ENCODE measurements at regions of chr5 and their contacts with region 1.

Region 1: GRCh38 chr5:171907725-171908343 is 98.6 kb downstream of the FBXW11 start:
- DNase-seq: peak; percentile 43
- H3K4me3 ChIP-seq: no peak overlapping the region
- H3K27ac ChIP-seq: no peak overlapping the region
- H3K27me3 ChIP-seq: no peaks in the 10 kb centered on the region
- CTCF ChIP-seq: peak; percentile 78

Region 2: DNA sequence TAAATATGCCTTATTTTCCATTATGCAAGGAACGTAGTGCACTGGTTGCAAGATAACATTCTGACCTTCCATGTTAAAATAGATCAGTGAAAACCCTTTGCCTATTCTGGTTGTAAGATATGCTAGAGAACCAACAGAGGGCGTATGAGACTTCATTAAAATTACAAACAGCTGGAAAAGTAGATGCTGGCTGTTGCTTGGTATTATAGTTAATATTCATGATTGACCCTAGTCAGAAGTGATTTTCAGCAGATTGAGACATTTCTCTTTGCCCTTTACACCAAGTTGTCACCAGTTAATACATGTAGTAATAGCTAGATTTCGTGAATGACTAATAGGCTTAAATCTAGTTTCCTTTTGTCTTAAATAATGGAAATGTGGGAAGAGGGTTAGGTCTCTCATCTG is 502.2 kb before region 1 on chr5:
- CTCF ChIA-PET with region 1: interaction called, 21 read pairs
- POLR2A ChIA-PET with region 1: no interaction called
- DNase-seq: no peak
- H3K4me3 ChIP-seq: no peak overlapping the region
- H3K27ac ChIP-seq: no peak overlapping the region
- H3K27me3 ChIP-seq: no peaks in the 10 kb centered on the region
- CTCF ChIP-seq: peak; percentile 51

Region 3: DNA sequence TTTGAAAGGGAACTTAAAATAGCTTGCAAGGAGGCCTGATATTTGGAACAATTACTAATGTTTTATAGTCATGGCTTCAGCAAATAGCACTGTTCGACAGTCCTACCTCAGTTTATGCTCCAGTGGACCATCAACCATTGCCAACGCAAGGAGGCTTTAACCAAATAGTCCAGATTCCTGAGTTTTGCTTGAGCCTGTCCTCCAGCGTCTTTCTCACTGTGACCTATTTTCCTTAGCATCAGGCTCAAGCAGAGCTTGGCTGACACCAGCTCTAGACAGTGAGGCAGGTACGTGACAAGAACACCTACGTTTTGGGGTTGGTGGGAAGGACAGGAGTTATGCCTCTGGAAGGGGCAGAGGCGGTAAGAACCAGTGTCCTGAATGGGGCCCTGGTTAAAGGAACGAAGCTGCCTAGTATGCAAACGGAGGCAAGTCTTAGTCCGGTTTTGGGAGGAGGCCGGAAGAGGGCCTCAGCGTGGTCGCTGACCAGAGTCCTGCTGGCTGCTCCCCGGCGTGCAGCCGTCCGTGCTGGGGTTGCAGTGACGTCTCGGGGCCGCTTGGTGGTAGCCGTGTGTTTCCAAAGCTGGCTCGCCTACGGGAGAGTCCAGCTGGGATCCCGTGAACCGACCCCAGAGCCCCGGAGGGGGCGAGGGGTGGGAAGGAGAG is 489.4 kb before region 1 on chr5:
- CTCF ChIA-PET with region 1: interaction called, 141 read pairs
- POLR2A ChIA-PET with region 1: no interaction called
- DNase-seq: peak; percentile 72
- H3K4me3 ChIP-seq: peak overlapping the region; percentile 54
- H3K27ac ChIP-seq: no peak overlapping the region
- H3K27me3 ChIP-seq: peaks cover 8% of the 10 kb centered on the region
- CTCF ChIP-seq: peak; percentile 90

Region 4: GRCh38 chr5:171630027-171630669 is 277.7 kb before region 1 on chr5:
- CTCF ChIA-PET with region 1: interaction called, 24 read pairs
- POLR2A ChIA-PET with region 1: no interaction called
- DNase-seq: peak; percentile 11
- H3K4me3 ChIP-seq: peak overlapping the region; percentile 33
- H3K27ac ChIP-seq: no peak overlapping the region
- H3K27me3 ChIP-seq: peaks cover 41% of the 10 kb centered on the region
- CTCF ChIP-seq: peak; percentile 69

Region 5: DNA sequence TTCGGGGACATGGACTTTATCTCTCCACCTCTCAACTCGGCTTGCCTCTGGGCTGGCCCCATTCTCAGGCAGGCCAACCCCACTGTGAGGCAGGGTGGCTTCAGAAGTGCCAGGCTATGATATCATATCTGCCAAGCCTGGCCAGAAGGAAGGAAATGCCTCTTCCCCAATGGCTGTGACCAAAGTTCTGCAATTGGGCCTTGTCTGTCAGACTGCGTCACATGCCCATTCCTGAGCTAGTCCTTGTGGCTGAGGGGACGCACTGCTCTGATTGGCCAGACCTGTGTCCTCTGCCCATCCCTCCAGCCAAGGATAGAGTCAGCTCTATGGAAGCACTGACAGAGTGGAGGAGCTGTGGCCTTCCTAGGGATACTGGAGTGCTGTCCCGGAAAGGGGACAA is 110.3 kb before region 1 on chr5:
- CTCF ChIA-PET with region 1: no interaction called
- POLR2A ChIA-PET with region 1: no interaction called
- DNase-seq: no peak
- H3K4me3 ChIP-seq: no peak overlapping the region
- H3K27ac ChIP-seq: no peak overlapping the region
- H3K27me3 ChIP-seq: peaks cover 34% of the 10 kb centered on the region
- CTCF ChIP-seq: no peak

Region 6: GRCh38 chr5:171893290-171893886 is 14.4 kb before region 1 on chr5:
- CTCF ChIA-PET with region 1: interaction called, 25 read pairs
- POLR2A ChIA-PET with region 1: no interaction called
- DNase-seq: peak; percentile 29
- H3K4me3 ChIP-seq: no peak overlapping the region
- H3K27ac ChIP-seq: no peak overlapping the region
- H3K27me3 ChIP-seq: no peaks in the 10 kb centered on the region
- CTCF ChIP-seq: no peak

Region 7: GRCh38 chr5:172059661-172060100 is 151.8 kb after region 1 on chr5:
- CTCF ChIA-PET with region 1: interaction called, 88 read pairs
- POLR2A ChIA-PET with region 1: no interaction called
- DNase-seq: no peak
- H3K4me3 ChIP-seq: no peak overlapping the region
- H3K27ac ChIP-seq: no peak overlapping the region
- H3K27me3 ChIP-seq: no peaks in the 10 kb centered on the region
- CTCF ChIP-seq: peak; percentile 61

Measured in AG04450 (cell line).